ENCODE measurements at regions of chr11 and their contacts with region 1.

Region 1: DNA sequence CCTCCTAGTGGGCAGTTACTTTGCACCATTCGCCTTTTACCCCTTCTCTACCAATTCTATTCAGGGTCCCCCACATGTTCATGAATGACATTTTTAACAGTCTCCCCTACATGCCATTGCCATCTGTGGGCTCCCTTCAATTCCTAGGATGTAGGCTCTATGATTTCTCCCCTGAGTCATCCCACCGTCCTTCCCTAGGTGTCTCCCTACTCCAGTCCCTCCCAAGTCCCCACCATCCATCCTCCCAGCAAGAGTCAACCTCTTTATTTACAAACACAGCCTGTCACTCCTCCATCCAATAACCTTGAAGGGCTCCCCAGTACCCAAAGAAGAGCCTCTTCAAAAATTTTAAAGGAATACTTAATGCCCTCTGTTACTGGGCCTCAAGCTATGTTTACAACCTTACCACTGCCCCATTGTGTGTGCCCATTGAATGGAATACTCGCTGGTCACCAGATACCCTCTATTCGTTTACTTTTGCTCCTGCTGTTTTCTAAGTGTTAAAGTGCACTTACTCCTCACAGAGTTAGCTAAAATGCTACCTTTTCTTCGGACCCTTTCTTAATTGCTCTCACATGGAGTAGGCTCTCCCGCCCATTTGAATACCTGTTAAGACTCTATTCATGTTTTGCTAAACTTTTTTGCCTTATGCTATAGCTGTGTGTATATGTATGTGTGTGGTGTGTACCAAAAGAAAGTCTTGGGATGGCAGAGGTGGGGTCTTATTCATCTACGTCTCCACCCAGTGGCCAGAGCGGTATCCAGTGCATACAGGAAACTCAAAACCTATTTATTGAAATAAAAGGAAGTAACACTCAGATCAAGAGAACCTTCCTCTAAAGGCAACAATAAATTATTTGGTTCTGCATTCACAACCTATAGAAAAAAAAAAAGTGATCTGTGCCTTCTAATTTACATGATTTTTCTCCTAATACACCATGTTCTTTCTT is 235.8 kb upstream of the CCDC90B start:
- DNase-seq: peak in 1 of 3 donors; percentile 22
- ATAC-seq: no peak
- H3K4me3 ChIP-seq: no peak overlapping the region
- H3K27ac ChIP-seq: no peak overlapping the region
- H3K4me1 ChIP-seq: peaks cover 2% of the 10 kb centered on the region
- H3K27me3 ChIP-seq: no peaks in the 10 kb centered on the region

Region 2: GRCh38 chr11:83471831-83472727 is 49.8 kb before region 1 on chr11:
- intact Hi-C with region 1: no loop called
- DNase-seq: no peak
- ATAC-seq: no peak
- H3K4me3 ChIP-seq: no peak overlapping the region
- H3K27ac ChIP-seq: no peak overlapping the region
- H3K4me1 ChIP-seq: no peaks in the 10 kb centered on the region
- H3K27me3 ChIP-seq: no peaks in the 10 kb centered on the region

Region 3: GRCh38 chr11:83724008-83724461 is 202.1 kb after region 1 on chr11:
- intact Hi-C with region 1: loop called in 1 of 4 experiments (anchors 10 kb)
- DNase-seq: peak in 1 of 3 donors; percentile 30
- ATAC-seq: peak; percentile 84 to 88
- H3K4me3 ChIP-seq: peak overlapping the region; percentile 73
- H3K27ac ChIP-seq: no peak overlapping the region
- H3K4me1 ChIP-seq: no peaks in the 10 kb centered on the region
- H3K27me3 ChIP-seq: no peaks in the 10 kb centered on the region